ENCODE measurements at regions of chr1 and their contacts with region 1.

Region 1: GRCh38 chr1:181166377-181167196 is 78.1 kb downstream of the IER5 start:
- DNase-seq: no peak

Region 2: GRCh38 chr1:180881806-180882509 is 284.6 kb before region 1 on chr1:
- intact Hi-C with region 1: loop called (anchors 5 kb)
- DNase-seq: no peak

Region 3: DNA sequence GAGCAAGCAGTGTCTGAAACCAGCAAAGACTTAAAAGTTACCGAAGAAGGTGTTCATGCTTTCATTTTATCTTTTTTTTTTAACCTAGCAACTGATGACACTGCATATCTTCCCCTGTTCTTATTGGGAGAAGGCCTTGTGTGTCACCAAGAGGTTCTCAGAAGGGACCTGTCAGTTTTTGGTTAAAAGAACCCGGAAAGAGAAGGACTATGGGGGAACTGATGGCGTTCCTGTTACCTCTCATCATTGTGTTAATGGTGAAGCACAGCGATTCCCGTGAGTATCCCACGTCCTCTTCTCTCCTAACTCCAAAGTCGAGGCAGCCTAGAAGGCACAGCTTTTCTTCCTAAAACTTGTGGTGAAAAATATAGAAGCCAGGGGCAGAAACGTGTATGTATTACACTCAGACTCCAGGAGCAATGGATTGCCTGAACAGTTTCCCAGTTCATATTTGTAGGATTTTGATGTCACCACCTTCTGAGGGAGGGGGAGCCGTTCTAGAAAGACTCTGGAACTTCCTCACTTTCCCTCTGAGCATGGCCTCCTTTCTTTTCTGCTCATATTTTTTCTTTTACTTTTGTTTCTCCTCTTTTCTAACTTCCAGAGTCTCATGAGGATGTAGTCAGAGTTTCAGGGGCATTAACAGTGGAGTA is 132.7 kb before region 1 on chr1 and contains the start of gene MR1:
- intact Hi-C with region 1: loop called (anchors 5 kb)
- DNase-seq: no peak
- total RNA-seq, gene MR1: 4.6 TPM

Region 4: DNA sequence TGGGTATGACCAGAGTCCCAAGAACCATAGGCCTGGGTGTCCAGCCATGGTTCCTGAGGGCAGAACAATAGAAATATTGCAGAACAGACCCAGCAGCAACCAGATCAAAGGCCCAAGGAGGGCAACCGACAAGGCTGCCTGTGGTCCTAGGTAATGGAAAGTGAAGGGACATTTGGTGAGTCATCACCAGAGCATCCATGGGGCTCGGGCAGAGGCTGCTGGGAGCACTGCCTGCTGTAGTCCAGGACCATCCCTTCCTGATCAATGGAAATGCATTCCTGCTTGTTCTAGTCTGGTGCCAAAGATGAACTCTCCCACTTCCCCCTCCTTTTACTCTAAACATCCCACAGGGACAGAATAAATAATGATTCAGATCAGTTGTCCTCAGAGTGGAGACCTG is 144.0 kb after region 1 on chr1:
- intact Hi-C with region 1: no loop called
- DNase-seq: no peak

Measured in cardiac septum (tissue), 1 donor.